CD4-positive, alpha-beta T cell (primary cell): ENCODE measurements at regions of chr2 and their contacts with region 1.

Region 1: DNA sequence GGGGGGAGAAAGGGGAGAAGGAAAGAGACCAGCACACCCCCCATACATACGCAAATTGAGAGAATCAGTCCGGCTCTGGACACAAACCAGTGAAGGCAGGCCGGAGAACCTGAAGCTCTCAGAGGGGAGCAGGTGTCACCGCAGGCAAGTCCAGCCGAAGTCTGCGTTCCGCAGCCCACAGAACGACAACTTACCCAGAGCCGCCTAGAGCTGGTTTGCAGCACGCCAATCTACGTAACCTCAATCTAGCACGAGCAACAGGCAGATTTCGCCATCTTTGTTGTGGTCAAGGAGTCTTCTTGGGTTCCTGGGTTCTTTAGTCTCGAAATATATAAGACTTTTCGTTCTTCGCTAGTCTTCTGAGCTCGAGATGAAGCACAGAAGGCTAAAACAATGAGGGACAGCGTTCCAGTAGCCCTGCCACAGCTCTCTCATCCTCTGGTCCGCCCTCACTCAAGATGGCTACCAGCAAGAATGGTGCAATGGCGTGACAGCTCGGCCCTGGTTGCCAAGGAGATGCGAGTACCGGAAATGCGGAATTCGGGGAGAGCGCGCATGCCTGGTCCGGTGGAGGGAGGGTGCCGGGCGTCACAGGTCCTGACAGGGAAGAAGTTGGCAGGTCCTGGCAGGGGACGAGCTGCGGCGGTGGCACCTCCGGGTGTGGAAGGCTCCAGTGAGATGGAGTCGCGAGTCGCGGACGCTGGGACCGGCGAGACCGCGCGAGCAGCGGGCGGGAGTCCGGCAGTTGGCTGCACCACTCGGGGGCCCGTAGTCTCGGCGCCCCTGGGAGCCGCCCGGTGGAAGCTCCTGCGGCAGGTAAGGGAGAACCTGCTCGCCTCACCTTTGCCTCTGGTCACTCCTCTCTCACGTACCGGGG is at the starts of genes CAMKMT and PREPL:
- DNase-seq: peak; percentile 97 to 99 (median 98)
- ATAC-seq: peak; percentile 85
- H3K4me3 ChIP-seq: peak within 1 kb of the TSS; percentile 89
- H3K4me3 Mint-ChIP-seq: peak within 1 kb of the TSS; percentile 98
- H3K27ac ChIP-seq: peak within 1 kb of the TSS; percentile 95 to 100
- H3K27ac Mint-ChIP-seq: peak within 1 kb of the TSS; percentile 99
- H3K4me1 ChIP-seq: peaks cover 26% of the 10 kb centered on the region
- H3K4me1 Mint-ChIP-seq: peaks cover 64% of the 10 kb centered on the region
- H3K27me3 ChIP-seq: no peaks in the 10 kb centered on the region
- H3K27me3 Mint-ChIP-seq: no peaks in the 10 kb centered on the region
- CTCF ChIP-seq: no peak
- total RNA-seq, gene CAMKMT: 11.9 to 13.9 TPM
- total RNA-seq, gene PREPL: 30.0 to 31.4 TPM

Region 2: GRCh38 chr2:42360890-42361727 is 2000.5 kb before region 1 on chr2 and contains the start of gene COX7A2L:
- CTCF ChIA-PET with region 1: no interaction called
- POLR2A ChIA-PET with region 1: no interaction called
- intact Hi-C with region 1: loop called in 1 of 2 experiments (anchors 10 kb)
- DNase-seq: peak; percentile 93 to 98 (median 96)
- ATAC-seq: peak; percentile 91
- H3K4me3 ChIP-seq: peak within 1 kb of the TSS; percentile 88
- H3K4me3 Mint-ChIP-seq: peak within 1 kb of the TSS; percentile 88
- H3K27ac ChIP-seq: peak within 1 kb of the TSS; percentile 91 to 96
- H3K27ac Mint-ChIP-seq: peak within 1 kb of the TSS; percentile 99
- H3K4me1 ChIP-seq: peaks cover 34% of the 10 kb centered on the region
- H3K4me1 Mint-ChIP-seq: peaks cover 45% of the 10 kb centered on the region
- H3K27me3 ChIP-seq: no peaks in the 10 kb centered on the region
- H3K27me3 Mint-ChIP-seq: no peaks in the 10 kb centered on the region
- CTCF ChIP-seq: no peak
- total RNA-seq, gene COX7A2L: 51.3 to 57.3 TPM

Region 3: GRCh38 chr2:43595603-43596412 is 765.8 kb before region 1 on chr2 and contains the start of gene THADA:
- CTCF ChIA-PET with region 1: no interaction called
- POLR2A ChIA-PET with region 1: interaction called, 3 read pairs
- intact Hi-C with region 1: loop called in 1 of 2 experiments (anchors 10 kb)
- DNase-seq: peak; percentile 90 to 98 (median 94)
- ATAC-seq: peak; percentile 90
- H3K4me3 ChIP-seq: peak within 1 kb of the TSS; percentile 84
- H3K4me3 Mint-ChIP-seq: peak within 1 kb of the TSS; percentile 97
- H3K27ac ChIP-seq: peak within 1 kb of the TSS; percentile 68 to 96
- H3K27ac Mint-ChIP-seq: peak within 1 kb of the TSS; percentile 93
- H3K4me1 ChIP-seq: peaks cover 21% of the 10 kb centered on the region
- H3K4me1 Mint-ChIP-seq: peaks cover 35% of the 10 kb centered on the region
- H3K27me3 ChIP-seq: no peaks in the 10 kb centered on the region
- H3K27me3 Mint-ChIP-seq: no peaks in the 10 kb centered on the region
- CTCF ChIP-seq: no peak
- total RNA-seq, gene THADA: 29.3 to 32.9 TPM

Region 4: DNA sequence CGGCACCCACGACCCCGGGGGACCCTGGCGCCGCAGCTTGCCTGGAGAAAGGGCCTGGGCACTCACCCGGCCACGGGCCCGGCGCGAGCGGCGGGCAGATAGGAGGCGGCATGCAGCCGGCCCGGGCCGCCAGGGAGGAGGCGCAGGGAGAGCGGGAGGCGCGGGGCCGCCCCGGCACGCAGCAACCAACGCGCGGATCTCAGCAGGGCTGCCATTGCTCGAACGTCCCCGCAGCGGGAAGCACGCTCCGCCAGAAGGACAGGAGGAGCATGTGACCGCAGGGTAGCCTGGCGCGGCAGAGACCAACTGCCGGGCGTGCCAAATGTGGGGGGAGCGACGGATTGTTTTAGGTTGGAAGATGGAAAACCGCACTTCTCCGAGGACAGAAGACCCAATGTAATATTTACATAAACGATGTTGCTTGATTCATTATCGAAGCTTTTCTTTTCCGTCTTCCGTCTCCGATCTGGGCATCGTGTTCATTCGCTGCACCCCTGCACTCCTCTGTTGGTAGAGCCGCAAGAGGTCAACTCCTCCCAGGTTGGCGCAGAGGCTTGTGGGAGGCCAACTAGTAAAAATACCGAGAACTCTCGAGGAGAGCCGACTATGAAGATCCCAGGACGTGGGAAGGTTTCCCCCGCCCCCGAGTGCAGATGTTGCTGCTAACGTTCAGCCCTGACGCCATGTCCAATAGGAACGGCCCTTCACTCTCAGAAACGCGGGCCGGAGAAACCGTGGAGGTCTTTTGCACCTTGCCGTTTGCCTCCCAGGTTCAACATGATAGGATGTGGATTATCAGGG is 365.6 kb before region 1 on chr2 and contains the start of gene LRPPRC:
- CTCF ChIA-PET with region 1: no interaction called
- POLR2A ChIA-PET with region 1: interaction called, 14 read pairs
- intact Hi-C with region 1: loop called (anchors 1 kb)
- DNase-seq: peak; percentile 80 to 96 (median 85)
- ATAC-seq: peak; percentile 95
- H3K4me3 ChIP-seq: peak within 1 kb of the TSS; percentile 99
- H3K4me3 Mint-ChIP-seq: peak within 1 kb of the TSS; percentile 91
- H3K27ac ChIP-seq: peak within 1 kb of the TSS; percentile 74 to 91
- H3K27ac Mint-ChIP-seq: peak within 1 kb of the TSS; percentile 89
- H3K4me1 ChIP-seq: peaks cover 32% of the 10 kb centered on the region
- H3K4me1 Mint-ChIP-seq: peaks cover 47% of the 10 kb centered on the region
- H3K27me3 ChIP-seq: no peaks in the 10 kb centered on the region
- H3K27me3 Mint-ChIP-seq: peaks cover 6% of the 10 kb centered on the region
- CTCF ChIP-seq: no peak
- total RNA-seq, gene LRPPRC: 55.2 to 55.4 TPM

Region 5: DNA sequence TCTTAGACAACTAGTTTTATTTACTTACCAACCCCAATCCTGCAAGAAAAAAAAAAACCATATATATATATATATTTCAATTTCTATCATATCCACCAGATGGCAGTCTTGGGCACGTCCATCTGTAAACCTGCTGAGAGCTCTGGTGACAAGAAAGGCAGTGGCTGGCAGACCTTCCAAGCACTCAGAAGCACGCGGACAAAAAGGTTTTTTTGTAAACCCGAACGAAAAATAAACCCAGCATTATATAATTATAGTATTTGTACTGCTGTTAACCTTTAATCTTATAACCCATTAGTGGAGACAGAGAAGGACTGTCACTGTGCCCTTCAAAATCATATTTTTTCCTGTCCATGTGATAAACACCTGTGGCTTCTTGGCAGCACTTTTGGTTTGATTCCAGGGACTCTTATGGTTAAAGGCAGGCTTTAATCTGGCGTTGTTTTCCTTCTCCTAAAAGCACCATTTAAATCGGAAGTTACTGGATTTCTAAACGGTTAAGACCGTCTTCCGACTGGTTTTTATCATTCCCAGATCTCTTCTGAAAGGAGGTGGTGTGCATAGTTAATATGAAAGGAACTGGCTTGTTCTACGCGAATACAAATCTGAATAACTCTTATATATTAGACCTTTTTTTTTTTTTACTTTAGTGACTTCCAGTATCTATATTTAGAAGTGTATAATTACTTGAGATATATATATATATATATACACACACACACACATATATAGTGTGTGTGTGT is 117.3 kb before region 1 on chr2:
- CTCF ChIA-PET with region 1: interaction called, 4 read pairs
- POLR2A ChIA-PET with region 1: interaction called, 9 read pairs
- intact Hi-C with region 1: loop called in 1 of 2 experiments (anchors 5 kb)
- DNase-seq: peak; percentile 25 to 86 (median 41)
- ATAC-seq: peak; percentile 95
- H3K4me3 ChIP-seq: peak overlapping the region; percentile 42
- H3K4me3 Mint-ChIP-seq: peak overlapping the region; percentile 94
- H3K27ac ChIP-seq: no peak overlapping the region
- H3K27ac Mint-ChIP-seq: peak overlapping the region; percentile 37
- H3K4me1 ChIP-seq: no peaks in the 10 kb centered on the region
- H3K4me1 Mint-ChIP-seq: peaks cover 36% of the 10 kb centered on the region
- H3K27me3 ChIP-seq: no peaks in the 10 kb centered on the region
- H3K27me3 Mint-ChIP-seq: no peaks in the 10 kb centered on the region
- CTCF ChIP-seq: peak; percentile 71

Region 6: DNA sequence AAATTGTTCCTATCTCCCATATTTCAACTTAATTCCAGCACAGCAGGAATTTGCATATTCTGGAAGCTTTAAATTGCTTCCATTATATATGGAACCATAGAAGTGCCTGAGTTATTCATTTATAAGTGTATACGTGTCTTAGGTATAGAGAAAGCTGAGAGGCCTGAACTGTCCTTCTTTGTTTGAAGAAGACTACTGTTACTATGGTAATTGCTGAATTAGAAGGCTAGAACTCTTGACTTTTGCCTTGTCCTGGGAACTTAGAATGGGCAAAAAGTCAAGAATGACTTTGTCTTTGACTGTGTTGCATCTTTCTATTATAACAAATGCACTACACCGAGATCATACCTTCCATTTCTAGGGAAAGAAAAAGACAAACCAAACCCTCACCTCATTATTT is 15.9 kb after region 1 on chr2:
- CTCF ChIA-PET with region 1: no interaction called
- POLR2A ChIA-PET with region 1: interaction called, 14 read pairs
- intact Hi-C with region 1: no loop called
- DNase-seq: no peak
- ATAC-seq: no peak
- H3K4me3 ChIP-seq: no peak overlapping the region
- H3K4me3 Mint-ChIP-seq: no peak overlapping the region
- H3K27ac ChIP-seq: no peak overlapping the region
- H3K27ac Mint-ChIP-seq: no peak overlapping the region
- H3K4me1 ChIP-seq: no peaks in the 10 kb centered on the region
- H3K4me1 Mint-ChIP-seq: no peaks in the 10 kb centered on the region
- H3K27me3 ChIP-seq: no peaks in the 10 kb centered on the region
- H3K27me3 Mint-ChIP-seq: no peaks in the 10 kb centered on the region
- CTCF ChIP-seq: no peak

Region 7: GRCh38 chr2:44479122-44479887 is 117.7 kb after region 1 on chr2:
- CTCF ChIA-PET with region 1: interaction called, 15 read pairs
- POLR2A ChIA-PET with region 1: interaction called, 6 read pairs
- intact Hi-C with region 1: no loop called
- DNase-seq: peak in 10 of 14 experiments; percentile 1 to 82 (median 22)
- ATAC-seq: peak; percentile 100
- H3K4me3 ChIP-seq: no peak overlapping the region
- H3K4me3 Mint-ChIP-seq: no peak overlapping the region
- H3K27ac ChIP-seq: no peak overlapping the region
- H3K27ac Mint-ChIP-seq: peak overlapping the region; percentile 27
- H3K4me1 ChIP-seq: no peaks in the 10 kb centered on the region
- H3K4me1 Mint-ChIP-seq: peaks cover 9% of the 10 kb centered on the region
- H3K27me3 ChIP-seq: no peaks in the 10 kb centered on the region
- H3K27me3 Mint-ChIP-seq: no peaks in the 10 kb centered on the region
- CTCF ChIP-seq: peak; percentile 100